Activated CD4-positive, alpha-beta memory T cell treated with anti-CD3 and anti-CD28 coated beads, Interleukin-2, amount 10 ng/mL, durations not matched to agents 7 days and 5 days (primary cell): ENCODE measurements at regions of chr16 and their contacts with region 1.

Region 1: GRCh38 chr16:28317040-28317880 is 24.9 kb downstream of the SBK1 start:
- DNase-seq: peak; percentile 73
- H3K4me3 Mint-ChIP-seq: no peak overlapping the region
- H3K27ac Mint-ChIP-seq: no peak overlapping the region
- H3K4me1 Mint-ChIP-seq: peaks cover 8% of the 10 kb centered on the region
- H3K27me3 Mint-ChIP-seq: no peaks in the 10 kb centered on the region

Region 2: GRCh38 chr16:28297784-28298510 is 19.3 kb before region 1 on chr16:
- CTCF ChIA-PET with region 1: interaction called, 18 read pairs
- POLR2A ChIA-PET with region 1: interaction called, 4 read pairs
- DNase-seq: peak; percentile 47
- H3K4me3 Mint-ChIP-seq: no peak overlapping the region
- H3K27ac Mint-ChIP-seq: peak overlapping the region; percentile 80
- H3K4me1 Mint-ChIP-seq: peaks cover 48% of the 10 kb centered on the region
- H3K27me3 Mint-ChIP-seq: peaks cover 18% of the 10 kb centered on the region